Activated CD4-positive, alpha-beta memory T cell treated with anti-CD3 and anti-CD28 coated beads, Interleukin-2, amount 10 ng/mL, durations not matched to agents 7 days and 5 days (primary cell): ENCODE measurements at regions of chr12 and their contacts with region 1.

Region 1: DNA sequence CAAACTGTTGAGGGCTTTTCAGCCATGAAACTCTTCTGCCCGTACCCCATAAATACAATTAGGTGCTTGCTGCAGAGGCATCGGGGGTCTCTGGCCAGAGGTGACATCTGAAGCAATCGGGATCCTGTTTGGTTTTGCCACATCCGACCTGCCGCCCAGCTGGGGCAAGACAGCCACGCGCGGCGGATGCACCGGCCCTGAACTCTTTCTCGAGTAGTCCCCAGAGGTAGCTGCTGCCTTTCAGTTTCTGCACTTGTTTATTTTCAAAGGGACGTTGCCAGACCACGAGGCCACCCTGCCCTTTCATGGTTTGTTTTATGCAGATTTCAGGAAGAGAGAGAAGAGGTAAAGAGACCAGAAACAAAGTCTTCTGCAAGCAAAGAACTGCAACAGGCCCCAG is 10.6 kb upstream of the MLXIP start:
- DNase-seq: peak; percentile 59
- H3K4me3 Mint-ChIP-seq: peak overlapping the region; percentile 1
- H3K27ac Mint-ChIP-seq: peak overlapping the region; percentile 44
- H3K4me1 Mint-ChIP-seq: peaks cover 15% of the 10 kb centered on the region
- H3K27me3 Mint-ChIP-seq: peaks cover 5% of the 10 kb centered on the region

Region 2: DNA sequence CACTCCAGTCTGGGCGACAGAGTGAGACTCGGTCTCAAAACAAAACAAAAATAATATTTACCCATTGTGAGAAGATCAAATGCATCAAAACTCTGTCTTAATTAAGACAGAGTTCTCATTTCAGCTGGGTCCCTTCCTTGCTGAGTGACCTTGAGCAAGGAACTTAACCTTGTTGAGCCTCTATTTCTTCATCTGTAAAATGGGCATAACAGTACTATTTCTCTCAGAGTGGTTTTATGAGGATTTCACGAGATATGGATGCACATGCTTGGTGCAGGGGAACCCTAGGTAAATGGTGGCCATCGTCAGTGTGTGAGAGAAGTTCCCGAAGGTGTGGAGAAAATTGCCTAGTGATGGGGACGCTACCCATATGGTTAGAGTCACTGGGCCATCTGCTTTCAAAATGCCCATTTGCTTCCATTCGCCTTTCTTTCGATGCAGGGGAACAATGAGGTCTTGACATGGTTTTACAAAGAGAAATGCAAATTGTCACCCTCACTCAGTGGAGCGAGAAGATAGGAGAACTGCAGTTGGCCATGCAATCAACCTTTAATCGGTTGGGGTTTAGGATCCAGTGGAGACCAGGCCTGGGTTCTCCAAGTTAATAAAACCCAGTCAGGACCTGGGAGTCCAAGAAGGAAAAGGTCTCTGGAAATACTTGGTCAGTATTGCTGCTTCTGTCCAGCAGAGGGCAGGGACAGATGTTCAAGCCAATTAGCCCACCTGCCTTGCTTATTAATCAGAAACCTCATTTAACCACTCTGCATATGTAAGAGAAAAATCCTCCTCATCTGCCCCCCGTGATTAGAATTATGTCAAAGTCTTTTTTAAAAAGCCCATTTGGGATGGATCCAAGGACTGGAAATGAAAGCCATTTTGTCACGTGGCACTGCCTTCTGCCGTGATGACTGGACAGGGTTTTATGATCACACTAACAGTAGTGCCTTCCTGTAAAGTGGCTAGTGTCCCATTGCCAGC is 112.4 kb before region 1 on chr12:
- CTCF ChIA-PET with region 1: no interaction called
- POLR2A ChIA-PET with region 1: no interaction called
- DNase-seq: no peak
- H3K4me3 Mint-ChIP-seq: no peak overlapping the region
- H3K27ac Mint-ChIP-seq: no peak overlapping the region
- H3K4me1 Mint-ChIP-seq: no peaks in the 10 kb centered on the region
- H3K27me3 Mint-ChIP-seq: peaks cover 6% of the 10 kb centered on the region

Region 3: DNA sequence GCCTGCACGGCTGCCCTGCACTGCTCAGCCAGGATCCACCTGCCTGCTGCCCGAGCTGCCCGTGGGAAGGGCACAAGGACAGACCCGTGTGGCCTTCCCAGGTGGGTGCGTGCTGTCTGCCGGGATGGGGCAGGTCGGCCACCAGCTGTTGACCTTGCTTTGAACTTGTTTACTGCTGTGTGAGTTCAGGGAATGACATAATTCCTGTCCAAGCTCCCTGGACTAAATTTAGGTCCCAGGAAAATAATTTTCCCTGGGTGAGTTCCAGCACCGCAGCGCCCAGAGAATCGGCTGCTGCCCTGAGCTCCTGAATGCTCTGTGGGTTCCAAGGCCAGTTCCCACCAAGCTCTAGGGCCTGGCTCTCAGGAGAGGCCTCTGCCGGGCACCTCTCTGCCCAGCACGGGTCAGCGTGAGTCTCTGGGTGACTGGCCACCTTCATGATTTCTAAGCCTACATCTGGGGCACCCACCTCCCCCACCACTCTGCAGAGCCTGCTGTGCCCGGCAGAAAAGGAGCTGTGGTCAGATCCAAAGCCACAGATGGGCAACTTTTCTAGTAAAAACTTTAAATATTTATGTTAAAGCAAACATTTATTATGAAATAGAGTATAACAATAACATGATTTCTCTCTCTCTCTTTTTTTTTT is 16.6 kb before region 1 on chr12:
- CTCF ChIA-PET with region 1: interaction called, 14 read pairs
- POLR2A ChIA-PET with region 1: no interaction called
- DNase-seq: no peak
- H3K4me3 Mint-ChIP-seq: no peak overlapping the region
- H3K27ac Mint-ChIP-seq: no peak overlapping the region
- H3K4me1 Mint-ChIP-seq: peaks cover 3% of the 10 kb centered on the region
- H3K27me3 Mint-ChIP-seq: no peaks in the 10 kb centered on the region